ENCODE measurements at regions of chr2 and their contacts with region 1.

Region 1: DNA sequence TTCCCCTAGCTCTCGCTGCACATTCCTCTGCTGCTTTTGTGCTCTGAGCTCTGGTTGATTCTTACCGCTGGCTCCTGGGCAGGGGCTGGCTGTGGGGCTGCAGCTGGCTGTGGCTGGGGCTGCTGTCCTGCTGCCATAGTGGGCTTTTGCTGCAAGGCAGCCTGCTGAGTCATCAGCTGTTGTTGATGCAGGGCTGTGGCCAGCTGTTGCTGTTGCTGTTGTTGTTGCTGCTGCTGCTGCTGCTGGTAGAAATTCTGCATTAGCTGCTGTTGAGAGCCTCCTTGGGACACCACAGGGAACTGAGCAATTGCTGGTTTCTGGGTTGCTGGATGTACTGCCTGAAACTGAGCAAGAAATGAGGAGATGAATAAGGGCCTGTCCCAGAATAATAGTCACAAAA is 77.2 kb upstream of the NFU1 start:
- DNase-seq: no peak
- H3K4me3 ChIP-seq: no peak overlapping the region
- H3K27ac ChIP-seq: no peak overlapping the region
- H3K4me1 ChIP-seq: no peaks in the 10 kb centered on the region
- H3K27me3 ChIP-seq: no peaks in the 10 kb centered on the region
- CTCF ChIP-seq: no peak
- POLR2A ChIP-seq: no peak

Region 2: GRCh38 chr2:69131983-69132675 is 382.3 kb before region 1 on chr2:
- intact Hi-C with region 1: no loop called
- DNase-seq: no peak
- H3K4me3 ChIP-seq: no peak overlapping the region
- H3K27ac ChIP-seq: no peak overlapping the region
- H3K4me1 ChIP-seq: no peaks in the 10 kb centered on the region
- H3K27me3 ChIP-seq: no peaks in the 10 kb centered on the region
- CTCF ChIP-seq: no peak
- POLR2A ChIP-seq: no peak

Region 3: DNA sequence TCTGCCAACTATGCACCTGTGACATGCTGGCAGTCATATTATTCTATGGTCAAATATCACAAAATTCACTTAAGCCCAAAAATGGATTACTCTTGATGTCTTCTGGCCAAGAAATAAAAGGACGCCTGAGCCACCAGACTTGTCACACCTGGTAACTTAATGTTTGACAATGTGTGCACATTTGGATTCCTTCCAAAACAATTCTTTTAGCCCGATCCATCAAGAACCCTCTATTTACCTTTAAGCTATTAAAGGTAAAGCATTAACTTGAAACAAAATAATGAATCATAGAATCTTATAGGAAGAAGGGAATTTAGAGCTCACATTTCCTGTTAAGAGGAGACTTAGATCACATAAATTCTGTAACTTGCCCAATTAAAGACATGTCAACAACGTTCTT is 30.7 kb before region 1 on chr2:
- intact Hi-C with region 1: loop called (anchors 2 kb)
- DNase-seq: no peak
- H3K4me3 ChIP-seq: no peak overlapping the region
- H3K27ac ChIP-seq: no peak overlapping the region
- H3K4me1 ChIP-seq: no peaks in the 10 kb centered on the region
- H3K27me3 ChIP-seq: no peaks in the 10 kb centered on the region
- CTCF ChIP-seq: no peak
- POLR2A ChIP-seq: no peak

Region 4: DNA sequence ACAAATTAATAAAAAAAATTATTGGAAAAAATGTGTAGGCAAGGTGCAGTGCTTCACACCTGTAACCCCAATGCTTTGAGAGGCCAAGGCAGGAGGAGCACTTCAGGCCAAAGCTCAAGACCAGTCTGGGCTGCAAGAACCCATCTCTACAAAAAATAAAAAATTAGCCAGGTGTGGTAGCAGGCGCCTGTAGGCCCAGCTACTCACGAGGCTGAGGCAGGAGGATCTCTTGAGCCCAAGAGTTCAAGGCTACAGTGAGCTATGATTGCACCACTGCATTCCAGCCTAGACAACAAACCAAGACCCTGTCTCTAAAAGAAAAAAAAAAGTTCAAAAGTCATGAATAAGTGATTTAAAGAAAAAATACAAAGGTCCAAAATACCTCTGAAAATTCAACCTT is 536.2 kb after region 1 on chr2:
- intact Hi-C with region 1: loop called (anchors 10 kb)
- DNase-seq: no peak
- H3K4me3 ChIP-seq: no peak overlapping the region
- H3K27ac ChIP-seq: no peak overlapping the region
- H3K4me1 ChIP-seq: no peaks in the 10 kb centered on the region
- H3K27me3 ChIP-seq: no peaks in the 10 kb centered on the region
- CTCF ChIP-seq: no peak
- POLR2A ChIP-seq: no peak

Measured in breast epithelium (tissue), 4 donors.